B cell (primary cell): ENCODE measurements at regions of chr1 and their contacts with region 1.

Region 1: GRCh38 chr1:160376525-160377131 is 9.8 kb downstream of the NHLH1 start:
- DNase-seq: peak; percentile 76
- ATAC-seq: peak; percentile 67
- H3K4me3 ChIP-seq: peak overlapping the region in 1 of 5 experiments; percentile 21
- H3K4me3 Mint-ChIP-seq: peak overlapping the region; percentile 70
- H3K27ac ChIP-seq: no peak overlapping the region
- H3K27ac Mint-ChIP-seq: peak overlapping the region; percentile 60
- H3K4me1 ChIP-seq: peaks cover 19 to 23% of the 10 kb centered on the region in 2 donors
- H3K4me1 Mint-ChIP-seq: peaks cover 24% of the 10 kb centered on the region
- H3K27me3 ChIP-seq: no peaks in the 10 kb centered on the region
- H3K27me3 Mint-ChIP-seq: no peaks in the 10 kb centered on the region
- CTCF ChIP-seq: peak; percentile 83

Region 2: DNA sequence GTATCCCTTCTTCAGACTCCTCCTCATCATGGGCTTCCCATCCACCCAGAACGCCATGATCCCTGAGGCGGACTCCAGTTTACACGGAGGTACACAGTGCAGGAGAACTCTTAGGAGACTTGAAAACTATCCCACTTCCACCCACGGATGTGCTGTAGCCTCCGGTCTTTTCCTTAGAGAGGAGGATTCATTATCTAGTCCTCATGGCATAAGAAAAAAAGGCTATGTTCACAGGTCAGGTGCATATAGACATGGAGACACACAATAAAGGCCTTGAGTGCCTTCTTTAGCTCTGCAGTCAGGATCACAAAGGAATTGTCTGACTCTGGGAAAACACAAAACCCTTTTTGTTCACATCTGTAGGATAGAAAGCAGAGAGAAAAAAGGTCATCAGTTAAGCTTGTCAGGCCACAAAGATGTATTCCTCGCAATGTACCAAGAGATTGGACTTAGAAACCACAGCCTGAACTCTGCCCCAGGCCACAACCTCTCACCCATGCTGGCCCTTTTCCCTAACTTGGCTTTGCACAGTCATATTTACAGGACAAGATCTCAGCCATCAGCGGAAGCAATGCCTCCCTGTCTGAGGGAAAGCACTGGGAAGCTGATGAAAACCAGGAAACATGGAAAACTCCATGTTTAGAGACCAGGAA is 671.3 kb before region 1 on chr1:
- CTCF ChIA-PET with region 1: no interaction called
- POLR2A ChIA-PET with region 1: no interaction called
- intact Hi-C with region 1: no loop called
- DNase-seq: no peak
- ATAC-seq: no peak
- H3K4me3 ChIP-seq: no peak overlapping the region
- H3K4me3 Mint-ChIP-seq: no peak overlapping the region
- H3K27ac ChIP-seq: no peak overlapping the region
- H3K27ac Mint-ChIP-seq: no peak overlapping the region
- H3K4me1 ChIP-seq: no peaks in the 10 kb centered on the region
- H3K4me1 Mint-ChIP-seq: no peaks in the 10 kb centered on the region
- H3K27me3 ChIP-seq: no peaks in the 10 kb centered on the region
- H3K27me3 Mint-ChIP-seq: peaks cover 9% of the 10 kb centered on the region
- CTCF ChIP-seq: no peak

Region 3: DNA sequence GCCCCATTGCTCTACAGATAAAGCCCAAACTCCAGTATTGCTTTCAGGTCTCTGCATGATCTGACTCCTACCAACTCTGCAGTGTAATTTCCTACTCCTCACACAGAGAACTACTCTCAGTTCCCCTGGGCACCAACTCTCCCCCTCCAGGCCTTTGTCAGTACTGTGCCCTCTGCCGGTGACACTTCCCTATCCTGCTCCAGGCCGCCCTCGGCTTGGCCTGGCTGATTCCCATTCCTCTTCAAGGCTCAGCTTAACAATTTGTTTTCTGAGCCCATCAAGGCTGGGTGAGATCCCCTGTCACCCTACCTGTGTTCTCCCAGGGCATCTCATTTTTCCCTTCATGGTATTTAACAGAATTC is 547.4 kb before region 1 on chr1:
- CTCF ChIA-PET with region 1: no interaction called
- POLR2A ChIA-PET with region 1: no interaction called
- intact Hi-C with region 1: no loop called
- DNase-seq: peak; percentile 58
- ATAC-seq: peak; percentile 76
- H3K4me3 ChIP-seq: no peak overlapping the region
- H3K4me3 Mint-ChIP-seq: no peak overlapping the region
- H3K27ac ChIP-seq: no peak overlapping the region
- H3K27ac Mint-ChIP-seq: no peak overlapping the region
- H3K4me1 ChIP-seq: peaks cover 6 to 25% of the 10 kb centered on the region in 2 donors
- H3K4me1 Mint-ChIP-seq: peaks cover 18% of the 10 kb centered on the region
- H3K27me3 ChIP-seq: peaks cover 0 to 8% (median 3%) of the 10 kb centered on the region in 4 experiments
- H3K27me3 Mint-ChIP-seq: peaks cover 12% of the 10 kb centered on the region
- CTCF ChIP-seq: peak; percentile 34

Region 4: GRCh38 chr1:160085686-160086455 is 290.8 kb before region 1 on chr1:
- CTCF ChIA-PET with region 1: interaction called, 26 read pairs
- POLR2A ChIA-PET with region 1: no interaction called
- intact Hi-C with region 1: no loop called
- DNase-seq: peak; percentile 79
- ATAC-seq: peak; percentile 58
- H3K4me3 ChIP-seq: no peak overlapping the region
- H3K4me3 Mint-ChIP-seq: peak overlapping the region; percentile 26
- H3K27ac ChIP-seq: no peak overlapping the region
- H3K27ac Mint-ChIP-seq: peak overlapping the region; percentile 21
- H3K4me1 ChIP-seq: peaks cover 6 to 9% of the 10 kb centered on the region in 2 donors
- H3K4me1 Mint-ChIP-seq: peaks cover 12% of the 10 kb centered on the region
- H3K27me3 ChIP-seq: peaks cover 0 to 25% (median 18%) of the 10 kb centered on the region in 4 experiments
- H3K27me3 Mint-ChIP-seq: peaks cover 20% of the 10 kb centered on the region
- CTCF ChIP-seq: peak; percentile 85

Region 5: DNA sequence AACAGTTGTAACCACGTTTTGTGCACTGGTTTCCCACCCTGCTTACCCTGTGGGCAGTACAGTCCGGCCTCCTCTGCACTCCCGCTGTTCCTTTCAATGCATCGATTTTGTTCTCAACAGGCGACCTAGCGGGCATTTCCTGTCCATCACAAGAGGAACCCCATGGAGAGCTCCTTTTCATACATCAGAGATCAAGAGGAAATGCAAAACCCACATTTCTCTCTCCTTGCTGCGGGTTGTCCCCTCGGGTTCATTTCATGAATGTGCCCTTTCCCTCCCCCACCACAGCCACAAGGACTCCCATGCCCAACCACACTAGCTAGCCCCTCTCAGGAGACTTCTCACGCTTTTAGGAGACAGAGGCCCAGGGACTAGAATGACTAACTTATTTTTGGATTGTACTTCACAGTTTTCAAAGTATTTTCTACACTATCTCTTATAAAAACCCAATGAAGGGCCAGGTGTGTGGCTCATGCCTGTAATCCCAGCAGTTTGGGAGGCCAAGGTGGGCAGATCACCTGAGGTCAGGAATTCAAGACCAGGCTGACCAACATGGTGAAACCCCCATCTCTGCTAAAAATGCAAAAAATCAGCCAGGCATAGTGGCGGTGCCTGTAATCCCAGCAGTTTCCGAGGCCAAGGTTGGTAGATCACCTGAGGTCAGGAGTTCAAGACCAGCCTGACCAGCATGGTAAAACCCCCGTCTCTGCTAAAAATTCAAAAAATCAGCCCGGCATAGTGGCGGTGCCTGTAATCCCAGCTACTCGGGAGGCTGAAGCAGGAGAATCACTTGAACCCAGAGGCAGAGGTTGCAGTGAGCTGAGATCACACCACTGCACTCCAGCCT is 206.9 kb before region 1 on chr1:
- CTCF ChIA-PET with region 1: no interaction called
- POLR2A ChIA-PET with region 1: no interaction called
- intact Hi-C with region 1: no loop called
- DNase-seq: peak; percentile 17
- ATAC-seq: peak; percentile 31
- H3K4me3 ChIP-seq: peak overlapping the region in 1 of 5 experiments; percentile 15
- H3K4me3 Mint-ChIP-seq: peak overlapping the region; percentile 68
- H3K27ac ChIP-seq: no peak overlapping the region
- H3K27ac Mint-ChIP-seq: peak overlapping the region; percentile 43
- H3K4me1 ChIP-seq: peaks cover 9 to 14% of the 10 kb centered on the region in 2 donors
- H3K4me1 Mint-ChIP-seq: peaks cover 15% of the 10 kb centered on the region
- H3K27me3 ChIP-seq: no peaks in the 10 kb centered on the region
- H3K27me3 Mint-ChIP-seq: peaks cover 9% of the 10 kb centered on the region
- CTCF ChIP-seq: no peak

Region 6: DNA sequence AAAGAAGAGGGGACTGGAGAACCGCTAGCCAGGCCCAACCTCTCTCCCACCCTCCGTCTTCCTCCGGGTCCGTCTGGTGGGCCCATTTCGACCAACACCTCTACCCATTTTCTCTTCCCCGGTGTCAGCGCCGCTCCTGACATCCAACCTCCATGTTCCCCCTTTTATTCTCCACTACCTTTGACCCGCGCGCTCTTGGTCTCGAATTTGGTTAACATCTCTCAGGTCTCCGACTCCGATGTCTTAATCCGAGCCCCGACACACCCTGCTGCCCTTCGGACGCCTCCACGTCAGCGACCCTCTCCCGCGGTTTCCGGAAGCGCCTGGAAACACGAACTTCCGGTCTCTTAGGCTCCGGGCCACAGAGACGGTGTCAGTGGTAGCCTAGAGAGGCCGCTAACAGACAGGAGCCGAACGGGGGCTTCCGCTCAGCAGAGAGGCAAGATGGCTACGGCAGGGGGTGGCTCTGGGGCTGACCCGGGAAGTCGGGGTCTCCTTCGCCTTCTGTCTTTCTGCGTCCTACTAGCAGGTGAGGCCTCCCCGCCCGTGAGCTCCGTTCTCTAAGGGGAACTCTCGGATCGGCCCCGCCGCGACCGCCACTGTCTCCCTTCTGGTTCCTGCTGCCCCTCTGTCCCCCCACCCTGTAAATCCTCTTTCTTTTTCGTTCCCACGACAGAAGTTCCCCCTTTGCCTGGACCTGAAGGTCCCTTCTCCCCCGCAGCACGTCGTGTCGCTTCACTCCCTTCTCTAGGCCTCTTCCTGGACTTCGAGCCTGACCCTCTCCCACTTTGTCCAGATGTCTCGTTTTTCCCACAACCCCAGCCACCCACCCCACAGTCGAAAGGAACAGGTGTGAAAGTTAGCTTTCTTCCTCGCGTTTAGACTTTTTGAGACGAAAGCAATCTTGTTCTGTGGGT is 33.4 kb before region 1 on chr1 and contains the starts of genes COPA and NCSTN:
- CTCF ChIA-PET with region 1: interaction called, 22 read pairs
- POLR2A ChIA-PET with region 1: no interaction called
- intact Hi-C with region 1: loop called (anchors 5 kb)
- DNase-seq: peak; percentile 97
- ATAC-seq: peak; percentile 91
- H3K4me3 ChIP-seq: peak within 1 kb of the TSS; percentile 90 to 100 (median 98)
- H3K4me3 Mint-ChIP-seq: peak within 1 kb of the TSS; percentile 99
- H3K27ac ChIP-seq: peak within 1 kb of the TSS; percentile 89 to 95
- H3K27ac Mint-ChIP-seq: peak within 1 kb of the TSS; percentile 99
- H3K4me1 ChIP-seq: peaks cover 46 to 54% of the 10 kb centered on the region in 2 donors
- H3K4me1 Mint-ChIP-seq: peaks cover 71% of the 10 kb centered on the region
- H3K27me3 ChIP-seq: no peaks in the 10 kb centered on the region
- H3K27me3 Mint-ChIP-seq: no peaks in the 10 kb centered on the region
- CTCF ChIP-seq: no peak
- total RNA-seq, gene COPA: 168 and 180 TPM in 2 replicates
- total RNA-seq, gene NCSTN: 95.1 and 110 TPM in 2 replicates

Region 7: DNA sequence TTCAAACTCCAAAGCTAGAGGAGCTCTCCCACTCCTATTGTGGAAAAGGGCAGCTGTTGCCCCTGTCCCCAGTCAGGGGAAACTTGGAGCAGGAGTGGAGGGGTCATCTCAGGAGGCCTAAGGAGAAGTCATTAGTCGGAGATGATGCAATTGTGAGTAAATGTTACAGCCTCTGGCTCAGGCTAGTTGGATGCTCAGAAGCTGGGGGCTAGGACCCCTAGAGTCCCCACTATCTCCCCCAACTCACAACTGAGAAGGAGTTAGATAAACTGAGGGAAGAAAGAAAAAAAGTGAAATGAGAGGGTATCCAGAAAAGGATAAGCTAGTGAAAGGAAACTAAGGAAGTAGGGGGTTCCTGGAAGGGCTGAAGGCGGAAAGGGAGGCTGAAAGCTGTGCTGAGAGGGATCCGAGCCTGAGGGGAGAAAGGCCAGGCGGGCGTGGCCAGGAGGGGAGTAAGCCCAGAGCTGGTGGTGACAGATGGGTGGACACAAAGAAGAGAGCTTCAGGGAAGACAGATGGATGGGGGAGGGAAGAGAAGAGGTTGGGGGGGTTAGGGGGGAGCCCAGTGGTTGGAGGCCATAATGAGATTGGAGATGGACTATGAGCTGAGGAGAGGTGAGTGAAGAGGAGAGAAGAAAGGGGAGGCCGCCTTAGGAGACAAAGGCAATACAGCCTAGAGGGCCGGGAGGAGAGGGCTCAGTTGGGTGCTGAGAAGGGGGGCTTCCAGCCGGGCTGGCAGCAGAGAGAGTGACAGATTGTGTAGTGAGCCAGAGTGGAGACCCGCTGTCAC is 14.3 kb before region 1 on chr1:
- CTCF ChIA-PET with region 1: interaction called, 15 read pairs
- POLR2A ChIA-PET with region 1: no interaction called
- intact Hi-C with region 1: no loop called
- DNase-seq: no peak
- ATAC-seq: no peak
- H3K4me3 ChIP-seq: no peak overlapping the region
- H3K4me3 Mint-ChIP-seq: no peak overlapping the region
- H3K27ac ChIP-seq: no peak overlapping the region
- H3K27ac Mint-ChIP-seq: peak overlapping the region; percentile 68
- H3K4me1 ChIP-seq: no peaks in the 10 kb centered on the region
- H3K4me1 Mint-ChIP-seq: no peaks in the 10 kb centered on the region
- H3K27me3 ChIP-seq: no peaks in the 10 kb centered on the region
- H3K27me3 Mint-ChIP-seq: no peaks in the 10 kb centered on the region
- CTCF ChIP-seq: no peak

Region 8: GRCh38 chr1:160664573-160665051 is 288.0 kb after region 1 on chr1:
- CTCF ChIA-PET with region 1: no interaction called
- POLR2A ChIA-PET with region 1: no interaction called
- intact Hi-C with region 1: no loop called
- DNase-seq: peak; percentile 76
- ATAC-seq: peak; percentile 80
- H3K4me3 ChIP-seq: peak overlapping the region in 1 of 5 experiments; percentile 44
- H3K4me3 Mint-ChIP-seq: peak overlapping the region; percentile 71
- H3K27ac ChIP-seq: peak overlapping the region; percentile 48 to 57
- H3K27ac Mint-ChIP-seq: peak overlapping the region; percentile 85
- H3K4me1 ChIP-seq: peaks cover 44 to 46% of the 10 kb centered on the region in 2 donors
- H3K4me1 Mint-ChIP-seq: peaks cover 60% of the 10 kb centered on the region
- H3K27me3 ChIP-seq: no peaks in the 10 kb centered on the region
- H3K27me3 Mint-ChIP-seq: no peaks in the 10 kb centered on the region
- CTCF ChIP-seq: no peak